GM13977 (cell line): ENCODE measurements at regions of chr14 and their contacts with region 1.

Region 1: GRCh38 chr14:88179716-88180115 is 143.4 kb downstream of the KCNK10 start:
- DNase-seq: no peak
- CTCF ChIP-seq: no peak

Region 2: DNA sequence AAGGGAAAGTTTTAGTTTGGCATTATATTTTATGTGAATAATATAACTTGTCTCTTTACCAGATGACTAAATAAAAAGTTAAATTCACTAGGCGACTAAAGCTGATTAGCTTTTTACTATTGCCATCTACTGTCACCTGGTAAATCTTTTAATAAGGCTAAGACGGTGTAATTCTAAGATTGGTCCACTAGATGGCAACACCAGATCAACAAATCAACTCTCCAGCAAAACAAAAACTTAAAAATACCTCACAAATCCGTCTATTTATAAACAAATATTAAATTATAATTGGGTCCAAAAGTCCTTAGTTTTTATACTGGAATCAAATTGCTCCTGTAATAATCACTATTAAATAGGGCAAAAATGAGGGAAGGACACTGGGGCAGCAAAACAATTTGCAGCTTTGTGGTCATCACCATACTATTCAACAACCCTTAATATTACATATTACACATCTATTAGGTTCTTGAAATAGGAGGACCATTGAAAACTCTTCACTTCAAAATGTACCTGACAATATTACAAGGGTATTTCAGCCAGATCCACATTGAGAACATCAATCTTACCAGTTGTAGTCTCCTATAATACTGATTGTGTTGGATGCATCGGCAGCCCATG is 234.6 kb before region 1 on chr14:
- in situ Hi-C with region 1: loop called (anchors 10 kb)
- DNase-seq: no peak
- CTCF ChIP-seq: peak; percentile 56